Heart right ventricle (tissue), 16 donors: ENCODE measurements at regions of chr1 and their contacts with region 1.

Region 1: DNA sequence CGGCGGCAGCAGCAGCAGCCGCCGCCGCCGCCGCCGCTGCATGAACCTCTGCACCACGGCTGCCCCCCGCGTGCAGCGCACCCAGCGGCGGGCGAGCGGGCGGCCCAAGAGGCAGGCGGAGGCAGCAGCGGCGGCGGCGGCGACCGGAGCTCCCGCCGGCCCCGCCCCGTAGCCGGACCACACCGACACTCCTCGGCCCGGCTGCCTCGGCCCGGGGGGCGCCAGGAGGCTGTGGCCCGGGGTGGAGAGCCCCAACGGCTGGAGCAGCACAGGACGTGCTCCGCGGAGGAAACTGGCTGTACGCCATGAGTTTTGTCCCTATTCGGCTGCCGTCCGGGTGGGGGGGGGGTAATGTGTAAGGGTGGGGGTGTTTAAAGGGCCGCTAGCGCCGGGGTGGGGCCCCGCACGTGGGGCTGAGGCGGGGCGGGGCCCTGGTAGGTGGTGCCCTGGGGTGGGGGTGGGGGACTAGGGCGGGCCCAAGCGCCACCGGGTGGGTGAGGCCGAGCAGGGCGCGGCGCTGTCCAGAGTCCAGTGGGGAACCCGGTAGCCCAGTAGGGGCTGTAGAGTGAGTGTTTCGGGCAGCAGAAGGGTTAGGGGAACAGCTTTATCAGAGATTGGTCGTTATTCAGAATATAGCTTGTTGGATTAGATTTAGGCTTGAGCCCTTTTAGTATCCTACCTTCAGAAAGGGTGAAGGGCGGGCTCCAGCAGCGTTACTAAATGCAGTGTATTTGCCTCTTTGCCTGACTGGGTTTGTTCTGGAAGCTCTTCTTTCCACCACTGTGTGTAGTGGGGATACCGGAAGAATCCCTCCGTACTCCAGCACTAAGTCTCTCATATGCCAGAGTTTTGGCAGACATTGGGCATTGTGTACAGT is at the start of gene FAM78B:
- DNase-seq: peak; percentile 78 to 84
- ATAC-seq: peak; percentile 91 to 98 (median 94)
- H3K4me3 ChIP-seq: peak within 1 kb of the TSS; percentile 45 to 83 (median 65)
- H3K27ac ChIP-seq: peak within 1 kb of the TSS in 9 of 10 donors; percentile 65 to 82 (median 72)
- H3K4me1 ChIP-seq: peaks cover 0 to 30% (median 23%) of the 10 kb centered on the region in 9 donors
- H3K27me3 ChIP-seq: peaks cover 0 to 64% (median 0%) of the 10 kb centered on the region in 7 donors
- CTCF ChIP-seq: peak in 2 of 9 donors; percentile 15 to 31
- total RNA-seq, gene FAM78B: 1.9 to 5.4 (median 2.8) TPM

Region 2: GRCh38 chr1:165392634-165393571 is 774.0 kb before region 1 on chr1:
- intact Hi-C with region 1: loop called in 1 of 10 experiments (anchors 10 kb)
- DNase-seq: peak; percentile 81 to 83
- ATAC-seq: peak; percentile 86 to 95 (median 93)
- H3K4me3 ChIP-seq: peak overlapping the region in 4 of 10 donors; percentile 16 to 32 (median 22)
- H3K27ac ChIP-seq: peak overlapping the region in 1 of 10 donors; percentile 26
- H3K4me1 ChIP-seq: peaks cover 0 to 23% (median 11%) of the 10 kb centered on the region in 9 donors
- H3K27me3 ChIP-seq: peaks cover 0 to 97% (median 0%) of the 10 kb centered on the region in 7 donors
- CTCF ChIP-seq: peak; percentile 86 to 98 (median 97)

Region 3: GRCh38 chr1:165928075-165928731 is 238.7 kb before region 1 on chr1:
- intact Hi-C with region 1: loop called in 8 of 10 experiments (anchors 5 to 10 kb)
- DNase-seq: peak in 1 of 2 donors; percentile 23
- ATAC-seq: peak in 3 of 8 donors; percentile 27 to 49 (median 47)
- H3K4me3 ChIP-seq: no peak overlapping the region
- H3K27ac ChIP-seq: no peak overlapping the region
- H3K4me1 ChIP-seq: no peaks in the 10 kb centered on the region
- H3K27me3 ChIP-seq: peaks cover 0 to 1% (median 0%) of the 10 kb centered on the region in 7 donors
- CTCF ChIP-seq: peak in 8 of 9 donors; percentile 39 to 74 (median 66)

Region 4: DNA sequence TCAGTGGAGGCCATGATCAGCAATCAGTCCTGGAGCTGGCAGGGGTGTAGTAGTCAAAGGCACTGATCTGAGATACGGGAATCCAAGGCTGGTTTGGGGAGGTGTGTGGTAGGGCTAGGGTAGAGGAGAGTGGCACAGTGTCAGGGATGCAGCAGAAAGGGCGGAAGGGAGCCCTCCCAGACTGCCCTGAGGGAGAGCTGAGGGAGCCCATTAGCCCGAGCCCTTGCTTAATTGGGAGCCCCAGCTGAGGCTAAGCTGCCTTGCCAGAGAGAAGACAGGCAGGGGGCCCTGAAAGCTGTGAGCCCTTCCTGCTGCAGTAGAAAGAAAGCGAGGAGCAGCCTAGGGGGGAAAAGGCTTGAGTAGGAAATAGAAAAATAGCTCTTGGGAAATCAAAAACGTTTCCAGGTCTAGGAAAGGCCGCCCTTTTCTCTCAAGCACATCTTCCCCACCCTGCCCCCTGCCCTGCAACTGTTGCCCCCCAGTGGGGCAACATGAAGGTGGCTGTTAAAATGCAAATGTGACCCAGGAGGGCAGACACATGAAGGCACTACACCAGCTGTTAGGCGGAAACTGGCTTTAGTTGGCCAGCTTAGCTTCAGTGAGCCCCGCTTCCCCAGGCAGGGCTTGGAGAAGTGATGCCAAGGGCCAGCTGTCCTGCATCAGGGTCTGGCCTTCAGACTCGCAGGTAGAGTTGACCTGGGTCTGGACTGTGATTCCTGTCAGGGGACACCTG is 233.3 kb before region 1 on chr1:
- intact Hi-C with region 1: loop called in 8 of 10 experiments (anchors 5 to 10 kb)
- DNase-seq: no peak
- ATAC-seq: no peak
- H3K4me3 ChIP-seq: no peak overlapping the region
- H3K27ac ChIP-seq: no peak overlapping the region
- H3K4me1 ChIP-seq: no peaks in the 10 kb centered on the region
- H3K27me3 ChIP-seq: peaks cover 0 to 5% (median 0%) of the 10 kb centered on the region in 7 donors
- CTCF ChIP-seq: no peak

Region 5: GRCh38 chr1:166111430-166111829 is 55.5 kb before region 1 on chr1:
- intact Hi-C with region 1: no loop called
- DNase-seq: no peak
- ATAC-seq: no peak
- H3K4me3 ChIP-seq: no peak overlapping the region
- H3K27ac ChIP-seq: no peak overlapping the region
- H3K4me1 ChIP-seq: no peaks in the 10 kb centered on the region
- H3K27me3 ChIP-seq: no peaks in the 10 kb centered on the region
- CTCF ChIP-seq: no peak

Region 6: DNA sequence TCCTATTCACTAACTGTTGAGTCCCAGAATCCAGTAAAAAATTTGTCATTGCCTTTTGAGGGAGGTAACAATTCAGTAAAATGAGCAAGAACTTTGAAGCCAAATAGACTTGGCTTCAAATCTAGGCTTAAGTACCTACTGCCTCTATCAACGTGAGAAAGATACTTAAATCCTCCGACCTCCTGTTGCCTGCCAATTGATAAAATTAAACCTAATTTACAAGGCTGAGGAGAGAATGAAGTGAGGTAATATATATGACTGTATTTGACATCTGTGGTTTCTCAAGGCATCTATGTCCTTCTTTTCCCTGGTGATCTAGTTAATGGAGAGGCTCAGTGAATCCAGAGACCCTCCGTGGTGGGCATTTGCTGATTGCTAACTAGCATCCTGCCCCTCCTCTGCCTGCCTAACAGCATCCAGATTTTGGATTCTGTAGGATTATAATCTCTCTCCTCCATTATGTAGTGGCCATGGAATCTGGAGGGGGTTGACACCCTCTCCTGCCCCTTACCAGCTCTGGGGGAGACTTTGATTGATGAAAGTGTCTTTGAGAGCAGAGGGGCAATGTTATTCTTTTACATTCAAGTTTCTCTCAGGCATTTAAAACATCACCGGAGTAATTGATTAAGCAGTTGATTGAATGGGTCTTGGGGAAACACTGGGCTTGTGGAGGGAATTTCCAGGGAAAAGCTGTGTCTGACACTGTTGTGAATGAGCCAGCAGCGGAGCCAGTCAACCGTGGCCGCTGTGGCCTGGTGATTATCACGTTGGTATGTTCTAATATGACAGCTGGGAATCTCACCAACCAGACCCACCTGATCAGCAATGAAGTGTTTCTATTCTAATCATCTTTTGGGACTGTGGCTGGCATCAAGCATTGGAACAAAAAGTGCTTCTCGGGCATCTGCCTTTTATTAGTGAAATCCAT is 140.6 kb after region 1 on chr1:
- intact Hi-C with region 1: loop called in 1 of 10 experiments (anchors 5 kb)
- DNase-seq: peak; percentile 50 to 63
- ATAC-seq: peak; percentile 86 to 99 (median 98)
- H3K4me3 ChIP-seq: peak overlapping the region in 3 of 10 donors; percentile 6 to 10 (median 9)
- H3K27ac ChIP-seq: peak overlapping the region; percentile 42 to 90 (median 74)
- H3K4me1 ChIP-seq: peaks cover 0 to 19% (median 0%) of the 10 kb centered on the region in 9 donors
- H3K27me3 ChIP-seq: no peaks in the 10 kb centered on the region
- CTCF ChIP-seq: no peak

Region 7: DNA sequence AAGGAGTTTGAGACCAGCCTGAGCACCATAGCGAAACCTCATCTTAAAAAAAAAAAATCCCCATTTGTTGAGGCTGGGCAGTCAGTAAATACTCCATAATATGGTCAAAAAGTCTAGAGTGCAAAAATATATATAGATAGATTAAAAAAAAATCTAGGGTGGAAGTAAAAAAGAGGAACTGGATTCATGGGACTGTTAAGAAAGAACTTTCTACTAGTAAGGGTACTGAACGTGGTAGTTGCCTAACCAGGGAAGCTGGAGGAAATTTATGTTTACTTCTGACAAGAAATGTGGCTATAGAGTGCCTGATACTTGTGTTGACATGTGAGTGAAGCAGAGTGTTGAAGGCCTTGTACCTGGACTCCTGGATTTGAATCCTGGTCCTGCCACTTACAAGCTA is 265.7 kb after region 1 on chr1:
- intact Hi-C with region 1: loop called in 1 of 10 experiments (anchors 10 kb)
- DNase-seq: no peak
- ATAC-seq: no peak
- H3K4me3 ChIP-seq: no peak overlapping the region
- H3K27ac ChIP-seq: no peak overlapping the region
- H3K4me1 ChIP-seq: no peaks in the 10 kb centered on the region
- H3K27me3 ChIP-seq: no peaks in the 10 kb centered on the region
- CTCF ChIP-seq: no peak